Activated CD8-positive, alpha-beta T cell treated with anti-CD3 and anti-CD28 coated beads for 36 hours (primary cell): ENCODE measurements at regions of chr1 and their contacts with region 1.

Region 1: GRCh38 chr1:214584805-214585766 is 17.9 kb upstream of the CENPF start:
- DNase-seq: no peak
- ATAC-seq: peak; percentile 78
- H3K4me3 Mint-ChIP-seq: no peak overlapping the region
- H3K27ac Mint-ChIP-seq: no peak overlapping the region
- H3K4me1 Mint-ChIP-seq: no peaks in the 10 kb centered on the region
- H3K27me3 Mint-ChIP-seq: peaks cover 6% of the 10 kb centered on the region
- CTCF ChIP-seq: peak; percentile 59

Region 2: DNA sequence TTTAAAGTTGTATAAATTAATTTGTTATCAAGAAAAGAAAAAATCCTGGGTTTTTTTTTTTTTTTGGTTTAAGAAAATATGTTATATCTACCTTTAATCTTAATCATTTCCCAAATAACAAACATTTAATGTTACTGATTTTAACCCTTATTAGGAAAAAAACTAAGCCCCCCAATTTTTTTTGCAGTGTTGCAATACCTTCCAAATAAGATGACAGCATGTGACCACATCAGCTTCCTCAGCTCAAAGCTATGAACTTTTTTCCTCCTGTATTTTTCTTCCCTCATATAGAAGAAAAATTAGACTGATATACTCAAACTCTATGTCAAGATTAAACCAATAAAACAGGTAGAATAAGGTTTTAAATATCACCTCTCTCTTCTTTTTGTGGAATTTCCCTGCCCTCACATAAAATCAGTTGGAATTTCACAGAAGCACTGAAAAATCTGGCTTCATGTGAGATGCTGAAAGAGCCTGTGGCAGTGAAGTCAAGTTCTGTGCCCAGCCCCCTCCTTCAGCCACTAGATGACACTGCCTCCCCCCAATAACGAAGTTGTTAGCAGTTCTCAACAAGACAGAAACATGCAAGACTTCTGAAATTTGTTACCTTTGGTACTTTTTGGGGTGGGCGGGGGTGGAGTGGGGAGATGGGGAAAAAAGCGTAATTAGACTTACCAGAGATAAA is 313.8 kb before region 1 on chr1:
- CTCF ChIA-PET with region 1: no interaction called
- POLR2A ChIA-PET with region 1: no interaction called
- intact Hi-C with region 1: loop called (anchors 10 kb)
- DNase-seq: peak; percentile 33
- ATAC-seq: no peak
- H3K4me3 Mint-ChIP-seq: no peak overlapping the region
- H3K27ac Mint-ChIP-seq: no peak overlapping the region
- H3K4me1 Mint-ChIP-seq: peaks cover 2% of the 10 kb centered on the region
- H3K27me3 Mint-ChIP-seq: peaks cover 8% of the 10 kb centered on the region
- CTCF ChIP-seq: no peak

Region 3: GRCh38 chr1:214386747-214387146 is 198.3 kb before region 1 on chr1:
- CTCF ChIA-PET with region 1: interaction called, 12 read pairs
- POLR2A ChIA-PET with region 1: no interaction called
- intact Hi-C with region 1: loop called (anchors 5 kb)
- DNase-seq: no peak
- ATAC-seq: no peak
- H3K4me3 Mint-ChIP-seq: no peak overlapping the region
- H3K27ac Mint-ChIP-seq: no peak overlapping the region
- H3K4me1 Mint-ChIP-seq: no peaks in the 10 kb centered on the region
- H3K27me3 Mint-ChIP-seq: no peaks in the 10 kb centered on the region
- CTCF ChIP-seq: no peak